Gastrocnemius medialis (tissue), 4 donors: ENCODE measurements at regions of chr9 and their contacts with region 1.

Region 1: DNA sequence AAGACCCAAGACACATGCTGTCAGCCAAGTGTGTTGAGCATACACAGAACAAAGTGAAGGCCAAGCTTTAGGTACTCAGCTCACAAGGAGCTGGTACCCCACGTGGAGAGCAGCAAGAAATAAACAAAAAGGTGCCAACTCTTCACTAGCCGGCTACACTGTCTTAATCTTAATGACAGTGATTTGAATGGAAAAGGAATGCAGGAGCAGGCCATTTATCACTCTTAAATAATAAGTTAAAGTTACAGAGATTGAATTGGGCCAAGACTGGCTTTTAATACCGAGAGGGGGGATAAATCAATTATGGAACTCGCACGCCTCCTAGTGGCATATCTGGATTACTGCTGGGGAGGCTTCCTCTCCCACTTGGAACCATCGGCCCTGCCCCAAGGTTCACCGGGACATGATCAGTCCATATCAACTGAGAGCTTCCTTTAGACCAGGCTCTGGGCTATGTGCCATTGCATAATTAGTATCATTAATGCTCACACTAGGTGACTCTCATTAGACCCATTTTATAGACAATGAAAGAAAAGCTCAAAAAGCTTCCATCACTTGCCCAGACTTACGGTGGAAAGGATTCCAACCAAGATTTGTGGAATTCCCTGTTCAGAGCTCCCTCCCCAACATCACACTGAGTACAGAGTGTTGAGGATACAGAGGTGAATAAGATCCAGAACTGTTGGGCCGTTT is 94.0 kb downstream of the ACTL7B start:
- DNase-seq: peak; percentile 12 to 32
- ATAC-seq: peak; percentile 70 to 82
- H3K4me3 ChIP-seq: peak overlapping the region in 1 of 4 donors; percentile 42
- H3K27ac ChIP-seq: no peak overlapping the region
- H3K4me1 ChIP-seq: peaks cover 0 to 6% of the 10 kb centered on the region in 2 donors
- H3K27me3 ChIP-seq: no peaks in the 10 kb centered on the region
- CTCF ChIP-seq: peak; percentile 60 to 83 (median 79)
- POLR2A ChIP-seq: no peak

Region 2: GRCh38 chr9:107137495-107138202 is 1624.2 kb before region 1 on chr9:
- in situ Hi-C with region 1: no loop called
- intact Hi-C with region 1: loop called (anchors 10 kb)
- DNase-seq: no peak
- ATAC-seq: peak; percentile 65 to 75
- H3K4me3 ChIP-seq: no peak overlapping the region
- H3K27ac ChIP-seq: no peak overlapping the region
- H3K4me1 ChIP-seq: peaks cover 6 to 8% of the 10 kb centered on the region in 2 donors
- H3K27me3 ChIP-seq: no peaks in the 10 kb centered on the region
- CTCF ChIP-seq: peak; percentile 52 to 70 (median 65)
- POLR2A ChIP-seq: no peak

Region 3: GRCh38 chr9:107465467-107466451 is 1296.0 kb before region 1 on chr9:
- in situ Hi-C with region 1: loop called in 3 of 4 experiments (anchors 25 kb)
- intact Hi-C with region 1: loop called (anchors 1 kb)
- DNase-seq: peak; percentile 41 to 63
- ATAC-seq: peak; percentile 89 to 91
- H3K4me3 ChIP-seq: peak overlapping the region; percentile 58 to 76 (median 66)
- H3K27ac ChIP-seq: peak overlapping the region in 2 of 4 donors; percentile 21 to 35
- H3K4me1 ChIP-seq: no peaks in the 10 kb centered on the region
- H3K27me3 ChIP-seq: peaks cover 0 to 6% (median 4%) of the 10 kb centered on the region in 3 donors
- CTCF ChIP-seq: peak; percentile 86 to 96 (median 91)
- POLR2A ChIP-seq: no peak

Region 4: DNA sequence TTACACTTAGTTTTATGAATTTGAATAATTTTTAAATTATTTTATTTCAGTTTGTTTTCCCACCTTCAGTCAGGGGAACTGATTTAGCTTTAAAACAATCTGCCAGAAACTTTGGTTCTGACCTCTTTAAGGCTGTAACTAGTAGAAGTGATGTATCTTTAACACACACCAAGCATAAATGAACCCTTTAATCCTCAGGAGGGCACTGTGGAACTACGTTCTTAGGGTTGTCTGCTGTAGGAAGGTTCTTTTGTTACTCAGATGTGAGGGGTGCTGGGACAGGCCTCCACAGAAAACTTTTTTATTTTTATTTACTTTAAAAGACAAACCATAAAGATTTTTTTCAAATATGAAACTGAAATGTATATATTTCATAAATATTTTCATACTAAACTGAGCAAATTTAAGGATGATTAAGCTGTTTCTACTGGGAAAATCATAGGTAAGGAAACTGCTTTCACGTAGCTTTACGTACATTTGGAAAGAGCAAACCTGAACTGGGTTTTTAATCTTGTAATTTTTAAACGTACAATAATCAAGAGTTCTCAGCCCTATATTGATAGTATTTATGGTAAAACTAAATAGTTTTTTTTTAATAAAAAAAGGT is 1277.6 kb before region 1 on chr9:
- in situ Hi-C with region 1: no loop called
- intact Hi-C with region 1: loop called (anchors 5 kb)
- DNase-seq: peak in 1 of 2 donors; percentile 28
- ATAC-seq: peak; percentile 67 to 77
- H3K4me3 ChIP-seq: peak overlapping the region in 3 of 4 donors; percentile 2 to 84 (median 81)
- H3K27ac ChIP-seq: peak overlapping the region; percentile 82 to 90 (median 90)
- H3K4me1 ChIP-seq: peaks cover 6% of the 10 kb centered on the region in 2 donors
- H3K27me3 ChIP-seq: no peaks in the 10 kb centered on the region
- CTCF ChIP-seq: peak; percentile 31 to 68 (median 51)
- POLR2A ChIP-seq: no peak

Region 5: DNA sequence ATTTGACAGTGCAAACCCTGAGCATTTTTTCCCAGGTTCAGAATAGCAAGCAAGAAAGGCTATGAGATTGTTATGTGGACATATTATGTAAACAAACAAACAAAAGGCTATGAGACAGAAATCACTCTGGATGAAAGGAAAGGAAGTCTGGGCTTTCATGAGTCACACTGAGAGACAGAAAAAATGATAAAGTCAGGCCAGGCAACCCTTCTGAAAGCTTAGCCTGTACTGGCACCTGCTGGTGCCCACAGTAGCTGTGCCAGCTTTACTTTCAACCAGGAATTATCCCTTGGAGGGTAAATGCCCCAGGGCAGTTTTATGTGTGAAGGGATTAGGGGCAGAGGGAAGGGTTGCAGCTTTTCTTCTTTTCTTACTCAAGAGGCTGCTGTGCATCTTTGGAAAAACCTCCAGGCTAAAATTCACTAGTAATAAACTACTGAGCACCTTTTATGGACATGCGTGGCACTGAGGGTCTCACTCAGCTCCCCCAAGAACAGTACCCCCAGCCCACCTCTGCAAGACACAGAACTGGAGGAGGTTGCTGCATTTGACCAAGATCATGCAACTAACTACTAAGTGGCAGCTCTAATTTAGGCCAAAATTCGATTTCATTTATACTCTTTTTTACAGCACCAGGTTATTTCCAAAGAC is 52.3 kb after region 1 on chr9:
- in situ Hi-C with region 1: no loop called
- intact Hi-C with region 1: no loop called
- DNase-seq: no peak
- ATAC-seq: peak in 1 of 2 donors; percentile 75
- H3K4me3 ChIP-seq: no peak overlapping the region
- H3K27ac ChIP-seq: no peak overlapping the region
- H3K4me1 ChIP-seq: no peaks in the 10 kb centered on the region
- H3K27me3 ChIP-seq: no peaks in the 10 kb centered on the region
- CTCF ChIP-seq: peak in 3 of 5 experiments; percentile 5 to 28 (median 8)
- POLR2A ChIP-seq: no peak